BJ (cell line): ENCODE measurements at regions of chr1 and their contacts with region 1.

Region 1: DNA sequence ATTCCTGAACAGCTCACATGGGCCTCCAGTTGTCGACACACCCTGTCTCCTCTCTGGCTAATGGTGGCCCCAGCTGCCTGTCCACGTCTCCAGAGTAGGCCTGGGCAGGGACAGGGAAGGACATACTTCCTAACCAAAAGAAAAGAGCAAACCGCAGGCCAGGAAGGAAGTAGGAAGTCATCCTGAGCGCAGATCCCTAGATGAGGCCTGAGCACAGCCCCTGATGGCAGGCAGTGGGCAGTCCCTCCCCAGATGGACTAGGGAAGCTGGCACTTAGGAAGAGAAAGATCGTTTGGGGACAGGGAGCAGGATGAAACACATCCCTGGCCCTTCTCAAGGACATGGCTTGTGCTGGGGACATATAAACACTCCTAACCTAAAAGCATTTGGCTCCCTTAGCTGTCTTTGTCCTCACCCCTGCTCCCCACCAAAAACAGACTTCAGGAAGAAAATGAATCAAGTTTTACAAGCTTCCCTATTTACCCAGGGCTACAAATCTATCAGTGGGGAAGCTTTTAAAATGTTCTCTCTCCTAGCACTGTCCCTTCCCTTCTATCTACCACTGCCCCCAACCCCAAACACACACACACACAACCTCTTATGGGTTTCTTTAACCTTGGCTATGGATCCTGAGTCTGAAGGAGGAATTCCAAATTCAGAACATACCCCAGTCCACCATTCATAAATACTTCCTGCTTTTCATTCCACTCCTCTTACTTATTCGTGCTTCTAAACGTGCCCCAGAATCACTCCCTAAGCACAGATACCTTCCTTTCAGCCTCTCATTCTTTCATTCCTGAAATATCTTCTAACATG is 21.1 kb downstream of the SSBP3 start:
- DNase-seq: peak; percentile 25
- H3K4me3 ChIP-seq: no peak overlapping the region
- H3K27me3 ChIP-seq: no peaks in the 10 kb centered on the region
- CTCF ChIP-seq: no peak

Region 2: GRCh38 chr1:53944469-53945182 is 440.5 kb before region 1 on chr1:
- CTCF ChIA-PET with region 1: no interaction called
- POLR2A ChIA-PET with region 1: no interaction called
- DNase-seq: no peak
- H3K4me3 ChIP-seq: peak overlapping the region; percentile 98
- H3K27me3 ChIP-seq: no peaks in the 10 kb centered on the region
- CTCF ChIP-seq: no peak

Region 3: DNA sequence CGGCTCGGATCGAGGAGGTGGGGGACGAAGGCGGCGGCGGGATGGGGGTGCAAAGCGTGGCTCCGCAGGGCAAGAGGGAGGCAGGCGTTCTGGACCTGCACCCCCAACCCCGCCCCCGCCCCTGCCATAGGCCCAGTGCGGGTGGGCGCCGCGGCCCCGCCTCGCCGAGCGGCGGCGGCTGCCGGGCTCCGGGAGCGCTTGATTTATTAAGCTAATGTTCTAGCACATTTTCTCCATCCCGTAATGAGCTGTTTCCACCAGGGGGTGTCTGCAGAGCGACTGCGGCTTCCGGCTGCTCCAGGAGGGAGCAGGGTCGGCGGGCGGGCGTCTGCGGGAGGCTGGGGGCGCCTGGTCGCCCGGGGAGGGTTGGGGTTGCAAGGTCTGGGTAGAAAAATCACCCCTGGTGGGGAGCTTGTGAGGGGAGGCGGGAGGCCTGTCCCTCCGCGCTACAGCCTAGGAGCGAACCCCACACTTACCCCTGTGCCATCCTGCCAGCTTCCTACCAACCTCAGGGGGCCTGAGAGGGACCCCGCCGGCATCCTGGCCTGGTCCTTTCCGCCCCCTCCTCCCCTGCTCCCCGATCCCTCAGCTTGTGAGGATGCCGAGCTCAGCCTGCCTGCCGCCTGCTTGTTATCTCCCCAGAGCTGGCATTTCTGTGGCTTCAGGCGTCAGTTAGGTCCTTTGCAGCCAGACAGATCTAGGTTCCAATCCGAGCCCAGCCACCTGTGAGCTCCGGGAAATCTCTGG is 114.4 kb after region 1 on chr1:
- CTCF ChIA-PET with region 1: no interaction called
- POLR2A ChIA-PET with region 1: interaction called, 24 read pairs
- DNase-seq: no peak
- H3K4me3 ChIP-seq: peak overlapping the region; percentile 37
- H3K27me3 ChIP-seq: peaks cover 8% of the 10 kb centered on the region
- CTCF ChIP-seq: peak; percentile 52